ENCODE measurements at regions of chr1 and their contacts with region 1.

Region 1: DNA sequence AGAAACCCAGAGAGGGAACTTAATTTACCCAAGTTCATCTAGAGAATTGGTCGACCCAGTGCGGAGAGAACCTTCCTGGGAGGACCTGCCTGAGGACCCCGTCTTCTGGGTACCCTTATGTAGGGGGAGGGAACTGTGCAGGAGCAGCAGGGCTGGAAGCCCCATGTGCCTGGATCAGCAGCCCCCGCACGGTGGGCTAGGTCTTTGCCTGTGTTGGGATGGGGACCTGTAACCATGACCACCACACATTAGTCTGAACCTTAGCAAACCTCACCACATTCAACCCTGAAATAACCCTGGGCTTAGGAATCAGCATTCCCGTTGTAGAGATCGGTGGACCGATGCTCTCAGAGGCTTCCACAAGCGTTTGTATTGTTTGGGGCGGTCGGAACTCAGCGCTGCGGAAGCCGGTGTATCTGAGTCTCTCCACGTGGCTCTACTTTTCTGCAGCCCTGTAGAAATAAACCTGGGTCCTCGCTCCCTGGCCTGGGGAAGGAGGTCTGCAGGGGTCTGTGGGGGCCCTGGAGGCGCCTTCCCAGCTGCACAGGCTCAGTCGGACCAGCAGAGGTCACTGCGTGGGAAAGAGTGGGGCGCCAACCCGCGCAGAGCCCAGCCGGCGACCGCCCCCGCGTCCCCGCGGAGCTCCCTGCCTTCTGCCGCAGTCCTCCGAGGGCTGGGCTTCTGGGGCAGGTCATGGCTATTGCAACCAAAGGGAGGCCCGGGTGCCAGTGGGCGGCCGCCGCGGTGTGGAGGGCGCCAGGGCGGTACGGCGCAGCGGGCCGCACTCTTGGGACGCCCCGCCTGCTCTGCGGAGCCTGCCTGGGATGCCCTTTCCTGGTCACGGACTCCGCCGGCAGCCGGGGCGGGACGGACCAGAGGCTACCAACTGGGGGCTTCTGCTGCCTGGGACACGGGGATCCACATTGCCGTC is 36.2 kb upstream of the KCNA10 start:
- DNase-seq: peak; percentile 7
- H3K4me3 ChIP-seq: peak overlapping the region; percentile 7 to 28
- H3K27ac ChIP-seq: no peak overlapping the region
- H3K4me1 ChIP-seq: no peaks in the 10 kb centered on the region
- H3K27me3 ChIP-seq: peaks cover 2% of the 10 kb centered on the region
- CTCF ChIP-seq: peak; percentile 14 to 68 (median 58)
- POLR2A ChIP-seq: no peak

Region 2: GRCh38 chr1:110615548-110616492 is 60.7 kb after region 1 on chr1:
- intact Hi-C with region 1: loop called (anchors 2 kb)
- DNase-seq: peak; percentile 69
- H3K4me3 ChIP-seq: no peak overlapping the region
- H3K27ac ChIP-seq: no peak overlapping the region
- H3K4me1 ChIP-seq: no peaks in the 10 kb centered on the region
- H3K27me3 ChIP-seq: peaks cover 4% of the 10 kb centered on the region
- CTCF ChIP-seq: peak in 3 of 4 experiments; percentile 47 to 79 (median 75)
- POLR2A ChIP-seq: no peak

Region 3: DNA sequence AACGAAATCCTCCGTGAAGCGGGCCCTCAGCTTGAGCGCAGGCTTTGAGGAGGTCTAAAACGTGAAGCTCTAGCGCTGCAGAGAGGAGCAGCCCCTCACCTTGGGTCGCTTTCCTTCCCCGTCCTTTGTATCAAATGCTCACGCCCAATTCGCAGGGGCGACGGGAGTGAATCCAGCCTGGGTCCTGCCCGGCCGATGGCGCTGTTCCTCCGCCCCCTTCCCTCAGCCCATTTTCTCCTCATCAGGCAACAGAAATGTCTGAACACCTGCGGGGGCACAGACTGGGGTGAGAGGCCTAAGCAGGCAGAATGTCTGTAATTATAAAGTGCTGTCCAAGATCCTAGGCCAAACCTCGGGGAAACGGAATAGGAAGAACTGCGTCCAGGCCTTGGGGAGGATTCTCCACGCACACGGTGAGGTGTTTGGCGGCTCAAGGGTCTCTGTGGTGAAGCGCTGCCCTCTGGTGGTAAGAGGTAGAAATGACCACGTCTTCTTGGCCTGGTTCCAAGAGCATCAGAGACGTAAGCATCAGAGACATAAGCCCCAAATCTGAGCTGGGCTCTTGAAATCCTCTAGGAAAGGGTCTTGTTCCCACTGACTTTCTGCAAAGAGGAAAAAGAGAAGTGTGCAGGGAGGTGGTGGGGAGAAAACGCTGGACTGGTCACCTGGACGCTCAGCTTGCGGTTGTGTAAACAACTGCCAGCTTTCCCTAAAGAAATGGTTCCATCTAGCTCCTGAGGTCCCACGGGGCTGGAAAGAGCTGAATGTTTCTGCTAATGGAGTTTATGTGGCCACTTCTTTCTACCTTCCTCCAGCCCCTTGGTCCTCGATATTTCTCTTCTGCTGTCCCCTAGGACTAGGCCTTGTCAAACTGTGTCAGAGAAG is 225.7 kb after region 1 on chr1:
- intact Hi-C with region 1: loop called (anchors 10 kb)
- DNase-seq: peak; percentile 57
- H3K4me3 ChIP-seq: no peak overlapping the region
- H3K27ac ChIP-seq: no peak overlapping the region
- H3K4me1 ChIP-seq: no peaks in the 10 kb centered on the region
- H3K27me3 ChIP-seq: no peaks in the 10 kb centered on the region
- CTCF ChIP-seq: peak; percentile 34 to 75 (median 70)
- POLR2A ChIP-seq: no peak

Measured in prostate gland (tissue), 2 donors.